Activated CD4-positive, alpha-beta T cell treated with anti-CD3 and anti-CD28 coated beads, Interleukin-2, amount 10 ng/mL, durations not matched to agents 24 days and 14 days (primary cell): ENCODE measurements at regions of chr4 and their contacts with region 1.

Region 1: GRCh38 chr4:82900331-82901128 is at the start of gene THAP9:
- DNase-seq: peak; percentile 99
- H3K4me3 Mint-ChIP-seq: no peak within 1 kb of the TSS
- H3K27ac Mint-ChIP-seq: no peak within 1 kb of the TSS
- H3K4me1 Mint-ChIP-seq: peaks cover 29% of the 10 kb centered on the region
- H3K27me3 Mint-ChIP-seq: peaks cover 2% of the 10 kb centered on the region
- total RNA-seq, gene THAP9: 1.7 and 3.7 TPM in 2 replicates

Region 2: GRCh38 chr4:82428969-82429727 is 471.4 kb before region 1 on chr4:
- intact Hi-C with region 1: loop called (anchors 2 kb)
- DNase-seq: peak; percentile 98
- H3K4me3 Mint-ChIP-seq: peak overlapping the region; percentile 96
- H3K27ac Mint-ChIP-seq: peak overlapping the region; percentile 99
- H3K4me1 Mint-ChIP-seq: peaks cover 61% of the 10 kb centered on the region
- H3K27me3 Mint-ChIP-seq: no peaks in the 10 kb centered on the region

Region 3: GRCh38 chr4:82774711-82775171 is 125.8 kb before region 1 on chr4:
- intact Hi-C with region 1: no loop called
- DNase-seq: no peak
- H3K4me3 Mint-ChIP-seq: no peak overlapping the region
- H3K27ac Mint-ChIP-seq: no peak overlapping the region
- H3K4me1 Mint-ChIP-seq: no peaks in the 10 kb centered on the region
- H3K27me3 Mint-ChIP-seq: peaks cover 4% of the 10 kb centered on the region

Region 4: GRCh38 chr4:82865592-82865991 is 34.9 kb before region 1 on chr4:
- intact Hi-C with region 1: loop called (anchors 1 kb)
- DNase-seq: peak; percentile 84
- H3K4me3 Mint-ChIP-seq: peak overlapping the region; percentile 39
- H3K27ac Mint-ChIP-seq: peak overlapping the region; percentile 87
- H3K4me1 Mint-ChIP-seq: peaks cover 34% of the 10 kb centered on the region
- H3K27me3 Mint-ChIP-seq: no peaks in the 10 kb centered on the region

Region 5: GRCh38 chr4:83034630-83035494 is 134.3 kb after region 1 on chr4 and contains the start of gene COPS4:
- intact Hi-C with region 1: loop called (anchors 1 kb)
- DNase-seq: peak; percentile 98
- H3K4me3 Mint-ChIP-seq: peak within 1 kb of the TSS; percentile 90
- H3K27ac Mint-ChIP-seq: peak within 1 kb of the TSS; percentile 98
- H3K4me1 Mint-ChIP-seq: peaks cover 16% of the 10 kb centered on the region
- H3K27me3 Mint-ChIP-seq: peaks cover 6% of the 10 kb centered on the region
- total RNA-seq, gene COPS4: 36.5 and 37.5 TPM in 2 replicates

Region 6: GRCh38 chr4:83231620-83232076 is 331.1 kb after region 1 on chr4:
- intact Hi-C with region 1: loop called (anchors 5 kb)
- DNase-seq: peak; percentile 89
- H3K4me3 Mint-ChIP-seq: peak overlapping the region; percentile 48
- H3K27ac Mint-ChIP-seq: peak overlapping the region; percentile 52
- H3K4me1 Mint-ChIP-seq: peaks cover 55% of the 10 kb centered on the region
- H3K27me3 Mint-ChIP-seq: peaks cover 6% of the 10 kb centered on the region

Region 7: GRCh38 chr4:83455281-83456129 is 555.0 kb after region 1 on chr4 and contains the starts of genes HELQ and MRPS18C:
- intact Hi-C with region 1: loop called (anchors 1 kb)
- DNase-seq: peak; percentile 98
- H3K4me3 Mint-ChIP-seq: peak within 1 kb of the TSS; percentile 99
- H3K27ac Mint-ChIP-seq: peak within 1 kb of the TSS; percentile 100
- H3K4me1 Mint-ChIP-seq: peaks cover 26% of the 10 kb centered on the region
- H3K27me3 Mint-ChIP-seq: no peaks in the 10 kb centered on the region
- total RNA-seq, gene HELQ: 9.1 and 11.4 TPM in 2 replicates
- total RNA-seq, gene MRPS18C: 83.9 and 86.6 TPM in 2 replicates